ENCODE measurements at regions of chr3 and their contacts with region 1.

Region 1: DNA sequence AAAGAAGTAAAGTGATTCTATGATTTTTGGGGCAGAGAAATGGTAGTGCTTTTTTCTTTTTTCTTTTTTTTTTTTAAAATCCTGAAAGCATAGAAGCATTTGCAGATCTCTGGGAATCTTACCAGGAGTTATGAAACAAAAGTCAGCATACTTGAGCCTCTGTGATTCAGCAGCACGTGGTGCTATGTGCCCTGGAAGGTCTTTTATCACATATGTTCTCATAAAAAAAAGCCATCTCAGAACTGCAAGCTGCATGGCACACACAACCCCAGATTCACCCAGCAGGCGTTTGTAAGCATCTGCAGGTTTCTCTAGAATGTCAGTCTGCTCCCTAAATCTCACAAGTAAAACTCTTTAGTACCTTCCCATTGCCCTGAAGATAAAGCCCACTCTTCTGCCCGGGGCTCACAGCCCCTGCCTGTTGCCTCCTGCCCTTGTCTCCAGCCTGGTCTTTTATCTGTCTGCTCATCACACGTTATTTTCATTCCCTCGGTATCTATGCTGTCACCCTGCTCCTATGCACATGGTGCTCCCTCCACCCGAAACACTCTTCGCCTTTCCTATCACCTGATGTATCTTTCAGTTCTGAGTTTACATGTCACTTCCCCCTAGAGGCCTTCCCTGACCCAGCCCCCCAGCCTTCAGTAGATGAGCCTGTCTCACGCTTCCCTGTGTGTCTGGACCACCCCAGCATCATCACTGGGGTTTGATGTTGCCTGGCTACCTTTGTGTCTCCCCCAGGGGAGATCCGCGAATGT is 72.4 kb downstream of the CHDH start:
- DNase-seq: no peak

Region 2: DNA sequence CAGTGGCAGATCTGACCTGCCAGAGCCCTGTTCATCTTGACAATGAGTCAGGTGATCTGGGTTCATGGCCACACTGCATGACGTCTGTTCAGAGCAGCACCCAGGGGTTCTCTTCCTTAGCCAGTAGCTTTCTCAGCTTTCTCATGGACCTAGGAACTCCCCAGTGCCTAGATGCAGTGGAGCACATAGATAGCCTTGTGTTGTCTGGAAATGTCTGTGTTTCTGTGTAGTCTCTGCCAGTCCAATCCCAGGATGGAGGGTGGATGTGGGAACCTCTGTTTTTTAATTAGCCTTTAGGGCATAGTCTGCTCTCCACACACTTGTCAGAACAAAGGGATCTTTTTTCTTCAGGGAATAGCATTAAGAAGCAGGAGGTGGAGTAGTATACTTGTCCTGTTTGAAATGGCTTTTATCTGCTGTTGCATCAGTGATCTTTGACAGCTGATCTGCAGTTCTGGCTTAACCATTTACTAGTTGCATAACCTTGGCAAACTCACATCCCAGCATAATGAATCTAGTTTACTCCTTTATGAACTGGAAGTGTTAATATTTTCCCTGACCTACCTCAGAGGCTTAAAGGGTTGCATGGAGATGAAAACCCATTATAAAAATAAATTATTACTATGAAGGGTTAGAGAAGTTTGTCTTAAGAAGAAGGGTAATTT is 295.5 kb before region 1 on chr3:
- intact Hi-C with region 1: loop called in 1 of 2 experiments (anchors 5 kb)
- DNase-seq: no peak

Region 3: GRCh38 chr3:54157860-54158259 is 384.1 kb after region 1 on chr3:
- intact Hi-C with region 1: no loop called
- DNase-seq: no peak